HepG2 (cell line): ENCODE measurements at regions of chr16 and their contacts with region 1.

Region 1: DNA sequence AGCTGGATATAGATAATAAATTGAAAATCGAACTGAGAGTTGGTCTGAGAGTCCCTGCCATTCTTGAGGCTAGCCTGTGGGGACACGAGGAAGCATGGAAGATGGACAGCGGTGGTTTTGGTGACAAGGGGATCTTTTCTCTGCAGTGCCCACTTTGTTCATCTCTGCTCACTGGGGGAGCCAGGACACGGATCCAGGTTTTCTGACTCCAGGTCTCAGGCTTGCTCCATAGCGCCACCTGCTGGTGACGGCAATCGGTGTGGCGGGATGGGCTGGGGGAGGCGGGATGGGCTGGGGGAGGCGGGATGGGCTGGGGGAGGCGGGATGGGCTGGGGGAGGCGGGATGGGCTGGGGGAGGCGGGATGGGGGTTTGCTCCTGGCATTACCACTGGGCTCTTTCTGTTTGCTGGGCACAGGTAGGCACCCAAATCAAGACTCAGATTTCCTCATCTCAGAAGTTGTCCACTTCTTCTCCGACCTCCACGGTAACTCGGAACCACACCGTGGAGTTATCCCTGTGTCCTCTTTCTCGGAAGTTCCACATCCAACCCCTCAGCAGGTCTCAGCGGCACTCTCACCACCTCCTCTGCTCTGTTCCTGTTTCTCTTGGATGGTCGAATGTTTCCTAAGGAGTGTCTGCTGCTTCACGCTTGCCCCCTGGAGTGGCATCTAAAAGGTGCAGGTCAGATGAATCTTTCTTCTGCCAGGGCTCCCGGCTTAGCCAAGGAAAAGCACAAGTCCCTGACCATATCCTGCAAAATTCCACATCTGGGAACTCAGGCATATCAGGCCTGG is 142.4 kb downstream of the CYLD start:
- DNase-seq: peak; percentile 30
- ATAC-seq: peak; percentile 84
- H3K4me3 ChIP-seq: no peak overlapping the region
- H3K27ac ChIP-seq: no peak overlapping the region
- H3K4me1 ChIP-seq: no peaks in the 10 kb centered on the region
- H3K27me3 ChIP-seq: peaks cover 0 to 7% of the 10 kb centered on the region in 2 experiments; a peak in 4 of 5 replicates
- CTCF ChIP-seq: peak; percentile 67
- EP300 ChIP-seq: no peak
- POLR2A ChIP-seq: no peak
- RAD21 ChIP-seq: no peak

Region 2: GRCh38 chr16:50821586-50821985 is 62.7 kb before region 1 on chr16:
- CTCF ChIA-PET with region 1: interaction called, 3 read pairs
- POLR2A ChIA-PET with region 1: no interaction called
- in situ Hi-C with region 1: no loop called
- intact Hi-C with region 1: loop called (anchors 1 kb)
- DNase-seq: peak; percentile 37
- ATAC-seq: peak; percentile 87
- H3K4me3 ChIP-seq: no peak overlapping the region
- H3K27ac ChIP-seq: no peak overlapping the region
- H3K4me1 ChIP-seq: no peaks in the 10 kb centered on the region
- H3K27me3 ChIP-seq: peaks cover 3 to 24% of the 10 kb centered on the region in 2 experiments; a peak in 2 of 5 replicates
- CTCF ChIP-seq: peak; percentile 60
- EP300 ChIP-seq: no peak
- POLR2A ChIP-seq: no peak
- RAD21 ChIP-seq: no peak

Region 3: DNA sequence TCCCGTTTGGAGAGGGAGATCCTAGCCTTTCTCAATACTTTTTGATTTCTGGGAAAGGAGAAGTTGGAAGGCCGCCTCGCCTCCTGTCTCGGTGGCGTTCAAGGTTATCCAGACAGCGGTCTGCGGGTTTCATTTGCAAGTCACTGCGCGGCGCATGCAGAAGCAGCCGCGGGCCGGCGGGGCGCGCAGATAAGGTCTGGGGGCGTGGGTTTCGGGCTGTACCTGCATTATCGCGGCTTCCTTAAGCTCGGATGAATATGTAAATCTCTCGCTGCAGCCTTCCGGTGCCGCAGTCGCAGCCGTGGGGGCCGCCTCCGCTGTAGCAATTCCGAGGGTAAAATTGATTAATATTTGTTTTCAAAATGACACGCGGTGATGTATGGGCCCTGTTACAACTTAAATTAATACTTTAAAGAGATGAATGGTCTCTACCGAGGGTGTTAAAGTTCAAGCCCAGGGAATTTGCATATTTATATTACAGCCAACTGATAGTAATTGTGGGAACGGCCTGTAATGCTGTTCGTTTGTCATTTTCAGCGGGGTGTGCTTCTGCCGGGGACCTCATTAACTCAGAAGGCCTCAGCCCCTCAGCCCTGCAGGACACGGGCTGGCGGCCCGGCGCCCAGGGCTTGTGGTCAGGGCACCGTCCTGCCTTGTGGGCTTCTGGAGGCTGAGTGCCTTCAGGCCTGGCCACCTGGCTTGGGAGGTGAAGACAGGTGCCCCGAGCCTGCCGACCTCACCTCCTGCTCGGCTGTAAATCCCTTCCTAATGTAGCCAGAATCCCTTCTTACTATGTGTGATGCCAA is 43.0 kb before region 1 on chr16:
- CTCF ChIA-PET with region 1: no interaction called
- POLR2A ChIA-PET with region 1: no interaction called
- in situ Hi-C with region 1: no loop called
- intact Hi-C with region 1: loop called (anchors 5 kb)
- DNase-seq: no peak
- ATAC-seq: no peak
- H3K4me3 ChIP-seq: no peak overlapping the region
- H3K27ac ChIP-seq: no peak overlapping the region
- H3K4me1 ChIP-seq: peaks cover 9% of the 10 kb centered on the region; the same call in 1 of the 2 replicates
- H3K27me3 ChIP-seq: peaks cover 0 to 9% of the 10 kb centered on the region in 2 experiments; a peak in 1 of 5 replicates
- CTCF ChIP-seq: no peak
- EP300 ChIP-seq: no peak
- POLR2A ChIP-seq: no peak
- RAD21 ChIP-seq: no peak

Region 4: GRCh38 chr16:51762081-51762996 is 878.1 kb after region 1 on chr16:
- CTCF ChIA-PET with region 1: interaction called, 5 read pairs
- POLR2A ChIA-PET with region 1: no interaction called
- in situ Hi-C with region 1: loop called (anchors 25 kb)
- intact Hi-C with region 1: no loop called
- DNase-seq: peak; percentile 52
- ATAC-seq: peak; percentile 100
- H3K4me3 ChIP-seq: no peak overlapping the region
- H3K27ac ChIP-seq: no peak overlapping the region
- H3K4me1 ChIP-seq: no peaks in the 10 kb centered on the region
- H3K27me3 ChIP-seq: no peaks in the 10 kb centered on the region; a peak in 2 of 5 replicates
- CTCF ChIP-seq: peak; percentile 96
- EP300 ChIP-seq: no peak
- POLR2A ChIP-seq: no peak
- RAD21 ChIP-seq: peak; percentile 91